ENCODE measurements at regions of chr1 and their contacts with region 1.

Region 1: DNA sequence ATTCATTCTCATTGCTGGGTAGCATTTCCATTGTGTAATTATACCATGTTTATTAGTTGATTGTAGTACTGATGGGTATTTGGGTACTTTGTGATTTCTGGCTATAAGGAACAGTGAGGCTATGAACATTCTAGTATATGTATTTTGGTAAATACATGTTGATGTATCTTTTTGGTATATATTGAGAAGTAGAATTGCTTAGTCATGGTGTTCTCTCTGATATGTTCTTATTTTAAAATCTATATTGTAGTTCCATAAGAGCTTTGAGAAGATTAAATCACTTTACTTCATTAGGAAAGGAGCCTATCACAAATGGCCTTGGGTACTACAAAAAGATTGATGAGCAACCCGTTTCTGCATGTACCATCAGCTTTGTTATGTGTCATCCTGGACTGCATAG is 13.4 kb downstream of the MIXL1 start:
- DNase-seq: no peak
- ATAC-seq: no peak
- H3K4me3 ChIP-seq: no peak overlapping the region
- H3K27ac ChIP-seq: no peak overlapping the region
- H3K4me1 ChIP-seq: no peaks in the 10 kb centered on the region
- H3K27me3 ChIP-seq: no peaks in the 10 kb centered on the region
- CTCF ChIP-seq: no peak

Region 2: GRCh38 chr1:225720937-225721336 is 515.9 kb before region 1 on chr1:
- intact Hi-C with region 1: no loop called
- DNase-seq: no peak
- ATAC-seq: no peak
- H3K4me3 ChIP-seq: no peak overlapping the region
- H3K27ac ChIP-seq: no peak overlapping the region
- H3K4me1 ChIP-seq: no peaks in the 10 kb centered on the region
- H3K27me3 ChIP-seq: no peaks in the 10 kb centered on the region
- CTCF ChIP-seq: no peak

Region 3: GRCh38 chr1:226384717-226385116 is 147.9 kb after region 1 on chr1:
- intact Hi-C with region 1: loop called in 1 of 10 experiments (anchors 5 kb)
- DNase-seq: no peak
- ATAC-seq: no peak
- H3K4me3 ChIP-seq: no peak overlapping the region
- H3K27ac ChIP-seq: no peak overlapping the region
- H3K4me1 ChIP-seq: peaks cover 0 to 2% (median 0%) of the 10 kb centered on the region in 9 donors
- H3K27me3 ChIP-seq: no peaks in the 10 kb centered on the region
- CTCF ChIP-seq: no peak